ENCODE measurements at regions of chr12 and their contacts with region 1.

Region 1: DNA sequence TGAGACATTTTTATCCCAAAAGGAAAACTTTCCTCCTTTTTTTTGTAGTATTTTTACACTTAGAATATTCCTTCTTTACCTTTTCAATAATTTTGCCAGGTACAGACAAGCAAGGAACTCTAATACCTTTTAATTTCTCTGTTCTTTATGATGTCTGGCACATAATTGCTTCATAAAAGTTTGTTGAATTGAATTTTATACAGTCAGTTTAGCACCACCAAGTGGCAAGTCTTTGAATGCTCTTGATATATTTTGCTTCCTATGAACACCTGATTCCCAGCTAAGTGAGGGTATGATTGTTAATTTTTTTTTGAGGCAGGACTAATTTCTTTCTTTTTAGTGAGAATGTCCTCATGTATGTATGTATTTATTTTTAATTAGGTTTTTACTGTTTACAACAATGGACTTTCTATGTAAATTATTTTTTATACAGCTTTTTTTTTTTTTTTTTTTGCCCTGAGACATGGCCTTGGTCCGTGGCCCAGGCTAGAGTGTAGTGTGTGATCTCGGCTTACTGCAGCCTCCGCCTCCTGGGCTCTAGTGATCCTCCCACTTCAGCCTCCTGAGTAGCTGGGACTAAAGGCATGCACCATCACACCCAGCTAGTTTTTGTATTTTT is 6.9 kb downstream of the TBC1D15 start:
- DNase-seq: no peak
- H3K4me3 ChIP-seq: no peak overlapping the region
- H3K27ac ChIP-seq: no peak overlapping the region
- H3K4me1 ChIP-seq: peaks cover 0 to 1% (median 0%) of the 10 kb centered on the region in 4 experiments; a peak in 1 of 7 replicates
- H3K27me3 ChIP-seq: no peaks in the 10 kb centered on the region
- CTCF ChIP-seq: peak in 1 of 3 experiments; percentile 48; a peak in 2 of 4 replicates
- EP300 ChIP-seq: no peak
- POLR2A ChIP-seq: no peak
- RAD21 ChIP-seq: peak; percentile 16 to 23; a peak in 3 of 4 replicates

Region 2: DNA sequence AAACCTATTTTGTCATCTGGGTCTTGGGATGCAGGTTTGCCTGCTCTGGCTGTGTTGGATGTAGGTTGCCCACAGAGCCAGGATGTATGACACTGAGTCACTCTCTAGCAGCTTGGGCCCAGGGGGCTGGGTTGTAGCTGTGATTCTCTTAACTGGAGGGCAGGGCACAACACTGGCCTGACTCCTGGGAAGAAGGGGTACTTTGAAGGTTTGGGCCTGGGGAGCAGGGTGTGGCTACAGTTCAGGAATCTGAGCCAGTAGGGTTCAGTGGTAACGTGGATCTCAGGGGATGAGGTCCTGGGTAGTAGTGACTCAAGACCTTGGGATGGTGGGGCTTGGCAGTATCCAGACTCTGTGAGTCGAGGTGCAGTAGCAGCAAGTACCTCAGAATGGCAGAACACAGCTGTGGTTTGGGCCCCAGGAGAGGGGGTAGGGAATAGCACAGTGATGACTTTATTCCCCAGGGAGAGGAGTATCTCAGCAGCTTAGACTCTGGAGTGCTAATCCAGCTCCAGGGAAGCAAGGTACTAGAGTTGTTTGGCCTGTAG is 18.8 kb after region 1 on chr12:
- CTCF ChIA-PET with region 1: interaction called, 11 read pairs
- POLR2A ChIA-PET with region 1: no interaction called
- DNase-seq: no peak
- H3K4me3 ChIP-seq: no peak overlapping the region
- H3K27ac ChIP-seq: no peak overlapping the region
- H3K4me1 ChIP-seq: no peaks in the 10 kb centered on the region; a peak in 1 of 7 replicates
- H3K27me3 ChIP-seq: no peaks in the 10 kb centered on the region
- CTCF ChIP-seq: no peak
- EP300 ChIP-seq: no peak
- POLR2A ChIP-seq: no peak
- RAD21 ChIP-seq: no peak